Calu3 (cell line): ENCODE measurements at regions of chr7 and their contacts with region 1.

Region 1: GRCh38 chr7:40673285-40673684 is 538.5 kb downstream of the SUGCT start:
- DNase-seq: no peak
- H3K4me3 Mint-ChIP-seq: no peak overlapping the region
- H3K27ac Mint-ChIP-seq: no peak overlapping the region
- H3K4me1 Mint-ChIP-seq: no peaks in the 10 kb centered on the region
- H3K27me3 Mint-ChIP-seq: no peaks in the 10 kb centered on the region
- CTCF ChIP-seq: no peak

Region 2: GRCh38 chr7:40412323-40412722 is 261.0 kb before region 1 on chr7:
- CTCF ChIA-PET with region 1: no interaction called
- intact Hi-C with region 1: loop called (anchors 5 kb)
- DNase-seq: no peak
- H3K4me3 Mint-ChIP-seq: no peak overlapping the region
- H3K27ac Mint-ChIP-seq: no peak overlapping the region
- H3K4me1 Mint-ChIP-seq: no peaks in the 10 kb centered on the region
- H3K27me3 Mint-ChIP-seq: no peaks in the 10 kb centered on the region
- CTCF ChIP-seq: no peak